ENCODE measurements at regions of chr12 and their contacts with region 1.

Region 1: GRCh38 chr12:16939871-16940306 is 333.9 kb upstream of the LMO3 start:
- DNase-seq: peak; percentile 71
- H3K4me3 ChIP-seq: no peak overlapping the region
- H3K27ac ChIP-seq: no peak overlapping the region
- H3K4me1 ChIP-seq: no peaks in the 10 kb centered on the region
- H3K27me3 ChIP-seq: no peaks in the 10 kb centered on the region
- CTCF ChIP-seq: peak; percentile 98 to 100

Region 2: GRCh38 chr12:17016116-17016864 is 76.4 kb after region 1 on chr12:
- CTCF ChIA-PET with region 1: no interaction called
- dilution Hi-C with region 1: no loop called
- in situ Hi-C with region 1: no loop called
- intact Hi-C with region 1: loop called (anchors 5 kb)
- DNase-seq: peak; percentile 53
- H3K4me3 ChIP-seq: no peak overlapping the region
- H3K27ac ChIP-seq: peak overlapping the region; percentile 27
- H3K4me1 ChIP-seq: peaks cover 22% of the 10 kb centered on the region
- H3K27me3 ChIP-seq: no peaks in the 10 kb centered on the region
- CTCF ChIP-seq: peak in 1 of 2 donors; percentile 27

Region 3: DNA sequence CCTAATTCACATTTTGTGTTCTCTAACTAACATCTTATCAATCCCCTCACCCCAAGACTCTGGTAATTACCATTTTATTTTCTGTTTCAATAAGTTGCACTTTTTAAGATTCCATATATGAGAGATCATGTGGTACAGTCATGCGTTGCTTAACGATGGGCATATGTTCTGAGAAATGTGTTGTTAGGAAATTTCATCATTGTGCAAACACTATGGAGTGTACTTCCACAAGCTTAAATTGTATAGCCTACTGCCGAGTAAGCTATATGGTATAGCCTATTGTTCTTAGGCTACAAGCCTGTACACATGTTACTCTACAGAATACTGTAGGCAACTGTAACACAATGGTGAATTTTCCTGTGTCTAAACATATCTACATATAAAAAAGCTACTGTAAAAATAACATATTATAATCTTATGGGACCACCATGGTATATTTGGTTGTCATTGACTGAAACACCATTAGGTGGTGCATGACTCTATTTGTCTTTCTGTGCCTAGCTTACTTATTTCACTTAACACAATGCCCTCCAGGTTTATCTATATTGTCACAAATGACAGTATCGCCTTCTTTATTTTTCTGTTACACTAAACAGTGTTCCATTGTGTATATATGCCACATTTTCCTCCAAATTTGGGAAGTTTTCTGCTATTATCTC is 139.5 kb after region 1 on chr12:
- CTCF ChIA-PET with region 1: no interaction called
- dilution Hi-C with region 1: no loop called
- in situ Hi-C with region 1: no loop called
- intact Hi-C with region 1: no loop called
- DNase-seq: no peak
- H3K4me3 ChIP-seq: no peak overlapping the region
- H3K27ac ChIP-seq: no peak overlapping the region
- H3K4me1 ChIP-seq: no peaks in the 10 kb centered on the region
- H3K27me3 ChIP-seq: no peaks in the 10 kb centered on the region
- CTCF ChIP-seq: no peak

Region 4: GRCh38 chr12:17642340-17642650 is 702.4 kb after region 1 on chr12:
- CTCF ChIA-PET with region 1: no interaction called
- dilution Hi-C with region 1: no loop called
- in situ Hi-C with region 1: no loop called
- intact Hi-C with region 1: loop called (anchors 2 kb)
- DNase-seq: no peak
- H3K4me3 ChIP-seq: no peak overlapping the region
- H3K27ac ChIP-seq: no peak overlapping the region
- H3K4me1 ChIP-seq: no peaks in the 10 kb centered on the region
- H3K27me3 ChIP-seq: no peaks in the 10 kb centered on the region
- CTCF ChIP-seq: no peak

Region 5: DNA sequence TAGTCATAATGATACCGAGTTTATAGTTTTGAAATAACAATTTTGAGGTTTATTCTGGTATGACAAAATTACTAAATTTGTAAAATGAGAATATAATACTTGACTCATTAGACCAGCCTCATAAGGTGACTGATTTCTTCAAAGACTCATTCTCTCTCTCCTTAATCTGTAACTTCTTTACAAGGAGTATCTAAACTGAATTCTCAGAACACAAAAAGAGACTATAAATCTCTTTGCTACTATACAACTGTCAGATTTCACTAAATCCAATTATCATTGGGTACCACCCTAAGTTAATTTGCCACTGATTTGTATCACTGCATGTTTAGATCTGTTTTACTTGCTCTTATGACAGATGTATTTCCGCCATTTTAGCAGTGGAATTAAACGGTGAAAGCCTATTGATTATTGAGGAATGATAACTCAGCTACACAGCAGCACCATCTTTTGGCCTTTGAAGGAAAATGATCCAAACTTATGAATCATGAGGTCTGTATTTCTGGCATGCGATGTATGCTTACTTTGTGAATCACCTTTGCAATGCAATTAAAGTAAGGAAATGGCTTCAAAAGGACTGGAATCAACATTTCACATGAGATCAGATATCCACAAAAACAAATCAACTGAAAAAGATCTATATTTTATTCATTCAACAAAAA is 988.9 kb after region 1 on chr12:
- CTCF ChIA-PET with region 1: no interaction called
- dilution Hi-C with region 1: no loop called
- in situ Hi-C with region 1: loop called (anchors 25 kb)
- intact Hi-C with region 1: loop called (anchors 1 kb)
- DNase-seq: peak; percentile 79
- H3K4me3 ChIP-seq: no peak overlapping the region
- H3K27ac ChIP-seq: peak overlapping the region; percentile 31
- H3K4me1 ChIP-seq: peaks cover 9% of the 10 kb centered on the region
- H3K27me3 ChIP-seq: no peaks in the 10 kb centered on the region
- CTCF ChIP-seq: peak; percentile 48 to 58

Region 6: GRCh38 chr12:17992002-17992656 is 1052.2 kb after region 1 on chr12:
- CTCF ChIA-PET with region 1: no interaction called
- dilution Hi-C with region 1: no loop called
- in situ Hi-C with region 1: loop called in 1 of 2 experiments (anchors 25 kb)
- intact Hi-C with region 1: no loop called
- DNase-seq: peak; percentile 19
- H3K4me3 ChIP-seq: no peak overlapping the region
- H3K27ac ChIP-seq: no peak overlapping the region
- H3K4me1 ChIP-seq: no peaks in the 10 kb centered on the region
- H3K27me3 ChIP-seq: no peaks in the 10 kb centered on the region
- CTCF ChIP-seq: peak; percentile 83 to 85

Measured in mammary epithelial cell (primary cell).